ENCODE measurements at regions of chr11 and their contacts with region 1.

Region 1: DNA sequence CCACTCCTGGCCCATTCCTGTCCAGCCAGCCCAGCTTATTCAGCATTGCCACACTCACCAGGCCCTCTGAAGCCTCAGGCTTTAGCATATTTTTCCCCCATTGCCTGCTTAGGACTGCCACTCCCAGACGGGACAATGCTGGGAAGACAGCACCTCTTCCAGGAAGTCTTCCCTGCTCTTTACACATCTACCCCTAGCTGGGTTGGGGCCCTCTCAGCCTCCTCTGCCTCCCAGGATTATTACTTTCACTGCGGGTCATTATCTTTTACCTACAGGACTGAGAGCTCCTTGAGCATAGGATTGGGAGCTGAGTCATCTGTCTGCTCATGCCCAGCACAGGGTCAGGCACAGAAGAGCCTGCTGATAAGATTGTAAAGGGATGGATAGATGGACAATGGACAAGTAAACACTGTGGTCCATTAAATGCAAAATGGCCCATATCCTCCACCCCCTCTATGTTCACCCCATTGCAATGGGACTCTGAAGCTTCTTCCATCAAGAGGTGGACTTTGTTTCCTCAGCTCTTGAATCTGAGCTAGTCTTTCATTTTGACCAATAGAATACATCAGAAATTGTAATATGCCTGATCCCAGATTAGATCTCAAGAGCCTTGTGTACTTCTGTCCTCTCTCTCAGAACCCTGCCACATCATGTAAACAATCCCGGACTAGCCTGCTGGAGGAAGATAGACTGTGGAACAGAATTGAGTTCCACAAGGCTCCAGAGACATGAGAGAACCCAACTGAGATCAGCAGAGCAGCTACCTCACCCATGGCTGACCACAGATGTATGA is 32.0 kb upstream of the LRRC32 start:
- H3K4me3 ChIP-seq: no peak overlapping the region
- H3K27ac ChIP-seq: no peak overlapping the region
- H3K4me1 ChIP-seq: no peaks in the 10 kb centered on the region
- CTCF ChIP-seq: no peak

Region 2: DNA sequence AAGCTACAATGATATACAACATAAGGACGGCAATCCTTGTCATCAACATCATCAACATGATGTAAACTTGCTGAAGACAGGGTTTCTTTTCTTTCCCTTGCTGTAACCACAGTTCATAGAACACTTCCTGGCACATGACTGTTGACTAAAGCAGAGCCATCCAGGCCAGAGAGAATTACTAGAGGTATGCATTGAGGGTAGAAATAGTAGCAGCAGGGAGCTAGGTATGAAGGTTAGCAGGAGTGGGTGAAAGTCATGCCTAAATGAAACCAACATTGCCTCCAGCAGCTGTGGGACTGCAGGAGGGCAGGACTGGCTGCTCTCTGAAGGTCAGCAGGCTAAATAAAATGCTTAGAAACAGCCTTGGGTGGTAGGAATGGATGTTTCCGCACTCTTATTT is 135.7 kb before region 1 on chr11:
- CTCF ChIA-PET with region 1: no interaction called
- POLR2A ChIA-PET with region 1: no interaction called
- H3K4me3 ChIP-seq: no peak overlapping the region
- H3K27ac ChIP-seq: no peak overlapping the region
- H3K4me1 ChIP-seq: no peaks in the 10 kb centered on the region
- CTCF ChIP-seq: no peak

Region 3: DNA sequence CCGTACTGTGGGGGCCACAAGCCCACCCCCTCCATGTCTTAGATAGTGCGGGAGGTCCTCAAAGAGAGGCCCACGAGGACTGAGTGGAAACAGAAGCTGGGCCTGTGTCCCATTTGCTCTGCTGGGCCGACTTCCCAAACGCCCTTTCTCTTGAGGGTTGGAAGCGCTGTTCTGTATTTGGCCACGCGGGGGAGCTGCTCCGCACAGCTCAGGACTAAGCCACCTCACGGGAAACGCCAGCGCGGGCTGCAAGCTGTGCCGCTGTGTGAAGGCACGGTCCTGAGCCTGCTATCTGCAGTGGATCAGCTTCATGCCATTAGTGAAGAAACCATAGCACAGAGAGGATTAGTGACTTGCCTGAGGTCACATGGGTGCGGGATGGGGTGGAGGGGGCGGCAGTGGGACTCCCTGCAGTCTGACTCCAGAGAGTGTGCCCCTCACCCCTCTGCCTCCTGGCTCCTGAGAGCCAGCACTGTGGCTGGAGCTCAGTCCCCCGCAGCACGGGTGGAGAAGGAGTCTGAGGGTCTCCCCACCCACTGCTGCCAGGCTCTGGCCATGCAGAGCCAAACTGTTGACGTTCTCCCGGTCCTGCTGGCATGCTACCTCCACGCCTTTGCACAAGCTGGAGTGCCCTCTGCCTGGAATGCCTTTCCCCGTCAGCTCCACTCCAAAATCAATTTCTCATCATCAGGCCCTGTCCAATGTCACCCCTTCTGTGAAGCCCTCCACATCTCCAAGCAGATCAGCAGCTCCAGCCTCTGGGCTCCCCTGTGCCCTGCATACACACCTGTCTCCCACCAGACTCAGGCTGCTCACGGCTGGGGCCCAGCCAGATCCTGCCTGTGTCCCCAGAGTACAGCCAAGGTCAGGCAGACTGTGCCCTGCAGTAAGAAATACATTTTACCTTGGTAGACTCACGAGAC is 19.5 kb after region 1 on chr11:
- CTCF ChIA-PET with region 1: interaction called, 22 read pairs
- POLR2A ChIA-PET with region 1: no interaction called
- H3K4me3 ChIP-seq: no peak overlapping the region
- H3K27ac ChIP-seq: no peak overlapping the region
- H3K4me1 ChIP-seq: no peaks in the 10 kb centered on the region
- CTCF ChIP-seq: peak; percentile 69

Region 4: DNA sequence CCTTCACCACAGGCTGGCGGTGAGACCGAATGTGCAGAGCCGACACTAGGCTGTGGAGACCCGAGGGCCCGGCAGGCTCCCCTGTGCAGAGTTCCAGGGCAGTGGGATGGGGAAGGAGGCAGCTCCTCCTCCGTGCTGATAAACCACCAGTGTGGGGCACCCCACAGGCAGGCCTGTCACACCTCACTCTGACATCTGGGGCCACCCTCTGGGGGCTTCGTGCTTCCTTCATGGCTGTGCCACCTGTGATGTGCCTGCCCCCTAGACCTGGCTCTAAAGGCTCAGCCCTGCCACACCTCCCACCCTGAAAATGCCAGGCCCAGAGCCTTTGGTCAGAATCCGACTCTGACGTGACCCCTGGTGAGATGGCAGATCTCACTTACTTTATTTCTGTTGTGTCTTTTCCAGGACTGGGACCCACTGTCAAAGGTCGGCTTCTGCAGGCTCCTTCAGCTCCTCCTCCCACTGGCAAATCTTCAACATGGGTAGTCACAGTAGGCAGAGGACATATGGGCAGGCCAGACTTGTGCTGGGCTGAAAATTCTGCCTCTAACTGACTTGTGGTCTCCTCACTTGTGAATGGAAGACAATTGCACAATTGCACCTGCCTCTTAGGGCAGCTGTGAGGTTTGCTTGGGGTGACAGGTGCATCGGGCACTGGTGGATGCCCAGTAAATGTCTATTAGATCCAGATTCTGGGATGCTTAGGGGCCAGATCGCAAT is 34.4 kb after region 1 on chr11:
- CTCF ChIA-PET with region 1: no interaction called
- POLR2A ChIA-PET with region 1: no interaction called
- H3K4me3 ChIP-seq: no peak overlapping the region
- H3K27ac ChIP-seq: no peak overlapping the region
- H3K4me1 ChIP-seq: no peaks in the 10 kb centered on the region
- CTCF ChIP-seq: no peak

Measured in HEK293 (cell line).